WTC11 (cell line): ENCODE measurements at regions of chr19 and their contacts with region 1.

Region 1: DNA sequence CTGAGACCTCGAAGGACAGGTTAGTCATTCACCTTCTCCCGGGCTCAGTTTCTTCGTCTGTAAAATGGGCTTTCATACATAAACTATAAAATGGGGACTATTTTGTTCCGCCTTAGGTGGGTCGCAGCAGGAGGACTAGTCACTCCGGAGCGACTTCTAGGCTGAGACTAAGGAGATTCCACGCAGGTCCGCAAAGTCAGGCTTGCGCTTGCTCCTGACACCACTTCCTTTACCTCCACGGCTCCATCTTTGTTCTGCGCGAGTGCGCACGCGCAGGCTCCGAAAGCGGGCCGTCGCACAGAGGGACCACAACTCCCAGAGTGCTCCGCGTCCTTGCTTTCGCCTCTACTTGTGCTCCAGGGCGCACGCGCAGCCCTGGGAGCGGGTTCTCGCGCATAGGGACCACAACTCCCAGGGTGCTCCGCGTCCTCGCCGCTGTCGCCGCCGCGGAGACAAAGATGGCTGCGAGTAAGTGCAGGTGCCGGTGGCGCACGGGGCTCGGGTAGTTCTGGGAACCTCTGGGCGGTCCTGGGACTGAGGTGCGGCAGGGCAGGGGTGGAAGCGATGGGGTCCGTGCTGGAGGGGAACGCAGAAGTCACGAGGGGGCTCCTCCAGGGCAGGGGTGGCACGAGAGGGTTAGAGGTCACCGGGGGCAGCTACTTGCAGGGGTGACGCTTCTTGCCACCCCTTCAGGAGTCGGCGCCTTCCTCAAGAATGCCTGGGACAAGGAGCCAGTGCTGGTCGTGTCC is at the start of gene NDUFA3:
- DNase-seq: peak; percentile 98
- ATAC-seq: peak; percentile 96
- H3K4me3 Mint-ChIP-seq: peak within 1 kb of the TSS; percentile 97
- H3K27ac Mint-ChIP-seq: peak within 1 kb of the TSS; percentile 96
- H3K4me1 Mint-ChIP-seq: peaks cover 3% of the 10 kb centered on the region
- H3K27me3 Mint-ChIP-seq: no peaks in the 10 kb centered on the region; the same call in 1 of the 2 replicates
- CTCF ChIP-seq: no peak
- total RNA-seq, gene NDUFA3: 181 to 203 TPM (median 203 TPM) in 3 replicates

Region 2: GRCh38 chr19:54115109-54116063 is 12.8 kb after region 1 on chr19 and contains the starts of genes PRPF31 and TFPT:
- CTCF ChIA-PET with region 1: no interaction called
- POLR2A ChIA-PET with region 1: interaction called, 10 read pairs
- DNase-seq: peak; percentile 97
- ATAC-seq: peak; percentile 93
- H3K4me3 Mint-ChIP-seq: peak within 1 kb of the TSS; percentile 95
- H3K27ac Mint-ChIP-seq: peak within 1 kb of the TSS; percentile 93
- H3K4me1 Mint-ChIP-seq: peaks cover 22% of the 10 kb centered on the region
- H3K27me3 Mint-ChIP-seq: no peaks in the 10 kb centered on the region; the same call in 1 of the 2 replicates
- CTCF ChIP-seq: no peak
- total RNA-seq, gene PRPF31: 82.3 to 92.8 TPM (median 89.5 TPM) in 3 replicates
- total RNA-seq, gene TFPT: 20.5 to 24.6 TPM (median 24.2 TPM) in 3 replicates